K562 (cell line): ENCODE measurements at regions of chr9 and their contacts with region 1.

Region 1: DNA sequence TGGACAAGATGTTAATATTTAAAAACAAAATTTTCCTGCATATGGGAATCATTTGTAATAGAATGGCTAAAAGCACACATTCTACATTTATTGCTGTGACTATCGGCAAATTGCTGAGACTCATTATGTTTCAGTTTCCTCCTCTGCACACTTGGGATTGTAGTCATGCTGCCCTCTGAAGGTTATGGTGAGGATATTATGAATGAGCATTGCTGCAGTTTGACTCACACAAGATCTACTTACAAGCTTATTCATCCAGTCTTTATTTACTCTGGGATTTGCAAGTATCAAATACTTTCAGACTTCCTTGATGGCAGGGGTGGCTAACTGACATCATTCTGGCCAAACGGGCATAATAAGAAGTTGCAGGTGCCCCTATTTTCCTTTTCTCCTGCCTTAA is 9.5 kb upstream of the NFIL3 start:
- DNase-seq: peak in 1 of 4 experiments; percentile 29
- ATAC-seq: peak; percentile 58; the same call in 2 of the 3 replicates
- H3K4me3 ChIP-seq: no peak overlapping the region
- H3K27ac ChIP-seq: no peak overlapping the region
- H3K4me1 ChIP-seq: no peaks in the 10 kb centered on the region
- H3K27me3 ChIP-seq: peaks cover 2 to 47% of the 10 kb centered on the region in 2 experiments
- CTCF ChIP-seq: peak; percentile 32 to 53 (median 33); a peak in 3 of 6 replicates
- EP300 ChIP-seq: no peak
- POLR2A ChIP-seq: no peak
- RAD21 ChIP-seq: peak; percentile 34 to 70

Region 2: GRCh38 chr9:91374939-91375338 is 58.2 kb before region 1 on chr9:
- CTCF ChIA-PET with region 1: no interaction called
- POLR2A ChIA-PET with region 1: no interaction called
- in situ Hi-C with region 1: no loop called
- intact Hi-C with region 1: no loop called
- DNase-seq: no peak
- ATAC-seq: no peak
- H3K4me3 ChIP-seq: no peak overlapping the region
- H3K27ac ChIP-seq: no peak overlapping the region
- H3K4me1 ChIP-seq: no peaks in the 10 kb centered on the region
- H3K27me3 ChIP-seq: 0 out of 5 replicates have a peak, but pooled peaks cover 0 to 2% of the 10 kb centered on the region in 2 experiments
- CTCF ChIP-seq: no peak
- EP300 ChIP-seq: no peak
- POLR2A ChIP-seq: no peak
- RAD21 ChIP-seq: no peak

Region 3: GRCh38 chr9:91623004-91623403 is 189.8 kb after region 1 on chr9:
- CTCF ChIA-PET with region 1: no interaction called
- POLR2A ChIA-PET with region 1: no interaction called
- in situ Hi-C with region 1: no loop called
- intact Hi-C with region 1: no loop called
- DNase-seq: no peak
- ATAC-seq: no peak
- H3K4me3 ChIP-seq: no peak overlapping the region
- H3K27ac ChIP-seq: no peak overlapping the region
- H3K4me1 ChIP-seq: no peaks in the 10 kb centered on the region
- H3K27me3 ChIP-seq: peaks cover 6 to 9% of the 10 kb centered on the region in 2 experiments; a peak in 3 of 5 replicates
- CTCF ChIP-seq: no peak
- EP300 ChIP-seq: no peak
- POLR2A ChIP-seq: no peak
- RAD21 ChIP-seq: no peak

Region 4: GRCh38 chr9:91676046-91676445 is 242.9 kb after region 1 on chr9:
- CTCF ChIA-PET with region 1: no interaction called
- POLR2A ChIA-PET with region 1: no interaction called
- in situ Hi-C with region 1: no loop called
- intact Hi-C with region 1: loop called (anchors 10 kb)
- DNase-seq: peak in 1 of 4 experiments; percentile 25
- ATAC-seq: peak; percentile 65; the same call in 2 of the 3 replicates
- H3K4me3 ChIP-seq: no peak overlapping the region
- H3K27ac ChIP-seq: no peak overlapping the region
- H3K4me1 ChIP-seq: no peaks in the 10 kb centered on the region
- H3K27me3 ChIP-seq: peaks cover 0 to 6% of the 10 kb centered on the region in 2 experiments; a peak in 1 of 5 replicates
- CTCF ChIP-seq: peak; percentile 34 to 48 (median 46); a peak in 4 of 6 replicates
- EP300 ChIP-seq: no peak
- POLR2A ChIP-seq: no peak
- RAD21 ChIP-seq: peak; percentile 14 to 47; a peak in 2 of 4 replicates

Region 5: DNA sequence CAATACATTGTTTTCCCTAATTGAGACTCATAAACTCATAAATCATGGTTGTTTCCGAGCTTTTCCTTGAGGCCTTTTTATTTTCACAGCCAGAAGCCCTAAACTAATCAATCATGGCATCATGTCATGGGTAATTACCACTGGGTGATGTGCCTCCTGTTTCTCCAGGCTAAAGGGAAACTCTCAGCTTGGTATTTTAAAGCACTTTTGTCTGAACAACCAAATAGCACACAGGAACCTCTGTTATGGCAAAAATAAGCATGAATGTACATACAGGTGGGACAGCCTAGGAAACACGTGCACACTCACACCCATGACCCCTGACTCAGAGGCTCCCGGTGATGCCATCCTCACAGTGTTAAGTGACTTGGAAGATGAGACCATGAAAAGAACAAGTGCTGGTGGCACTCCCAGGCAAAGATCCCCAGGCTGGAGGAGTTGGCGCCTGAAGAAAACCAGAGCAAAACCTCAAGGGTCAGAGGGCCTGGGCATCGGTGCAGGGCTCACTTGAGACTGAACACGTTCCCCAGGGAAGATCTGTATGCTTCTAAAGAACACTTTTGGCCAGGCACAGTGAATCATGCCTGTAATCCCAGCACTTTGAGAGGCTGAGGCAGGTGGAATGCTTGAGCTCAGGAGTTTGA is 362.5 kb after region 1 on chr9:
- CTCF ChIA-PET with region 1: no interaction called
- POLR2A ChIA-PET with region 1: no interaction called
- in situ Hi-C with region 1: no loop called
- intact Hi-C with region 1: no loop called
- DNase-seq: no peak
- ATAC-seq: no peak
- H3K4me3 ChIP-seq: no peak overlapping the region
- H3K27ac ChIP-seq: no peak overlapping the region
- H3K4me1 ChIP-seq: peaks cover 31 to 34% of the 10 kb centered on the region in 2 experiments
- H3K27me3 ChIP-seq: no peaks in the 10 kb centered on the region
- CTCF ChIP-seq: no peak
- EP300 ChIP-seq: no peak
- POLR2A ChIP-seq: no peak
- RAD21 ChIP-seq: no peak